ENCODE measurements at regions of chr18 and their contacts with region 1.

Region 1: GRCh38 chr18:54532217-54532616 is 58.8 kb upstream of the DYNAP start:
- DNase-seq: no peak
- H3K4me3 Mint-ChIP-seq: no peak overlapping the region
- H3K27ac Mint-ChIP-seq: no peak overlapping the region
- H3K4me1 Mint-ChIP-seq: no peaks in the 10 kb centered on the region
- H3K27me3 Mint-ChIP-seq: peaks cover 7% of the 10 kb centered on the region

Region 2: DNA sequence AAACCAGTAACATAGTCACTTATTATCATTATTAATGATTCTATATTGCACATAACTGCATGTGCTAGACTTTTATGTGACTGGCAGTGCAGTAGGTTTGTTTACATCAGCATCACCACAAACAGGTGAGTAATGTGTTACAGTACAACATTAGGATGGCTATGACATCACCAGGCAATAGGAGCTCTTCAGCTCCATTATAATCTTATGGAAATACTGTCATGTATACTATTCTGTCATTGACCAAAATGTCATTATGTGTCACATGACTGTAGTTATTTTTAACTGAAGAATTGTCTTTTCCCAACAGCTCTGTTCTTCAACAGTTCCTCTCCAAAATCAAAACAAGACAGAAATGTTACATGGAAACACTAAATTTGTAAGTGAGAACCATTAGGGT is 78.2 kb before region 1 on chr18:
- CTCF ChIA-PET with region 1: no interaction called
- intact Hi-C with region 1: loop called (anchors 5 kb)
- DNase-seq: no peak
- H3K4me3 Mint-ChIP-seq: no peak overlapping the region
- H3K27ac Mint-ChIP-seq: no peak overlapping the region
- H3K4me1 Mint-ChIP-seq: no peaks in the 10 kb centered on the region
- H3K27me3 Mint-ChIP-seq: peaks cover 7% of the 10 kb centered on the region

Region 3: DNA sequence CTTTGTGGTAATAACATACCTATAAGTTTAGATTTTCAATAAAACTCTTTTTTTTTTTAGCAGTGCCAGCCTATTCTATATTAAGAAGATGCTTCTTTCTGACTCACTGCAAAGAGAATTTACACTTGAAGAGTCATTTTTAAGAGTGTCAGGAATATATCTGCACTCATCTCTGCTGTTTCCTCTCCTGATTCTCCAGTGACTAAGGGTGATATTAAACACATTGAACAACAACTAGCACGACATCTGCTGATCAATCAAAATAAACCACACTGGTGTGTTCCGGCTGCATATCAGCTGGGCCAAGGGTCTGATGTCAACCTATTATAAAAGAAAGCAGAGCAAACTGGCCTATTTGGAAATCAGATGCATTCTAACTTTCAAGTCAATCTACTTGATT is 311.1 kb after region 1 on chr18:
- CTCF ChIA-PET with region 1: no interaction called
- intact Hi-C with region 1: no loop called
- DNase-seq: no peak
- H3K4me3 Mint-ChIP-seq: no peak overlapping the region
- H3K27ac Mint-ChIP-seq: no peak overlapping the region
- H3K4me1 Mint-ChIP-seq: no peaks in the 10 kb centered on the region
- H3K27me3 Mint-ChIP-seq: no peaks in the 10 kb centered on the region

Measured in activated naive CD4-positive, alpha-beta T cell treated with anti-CD3 and anti-CD28 coated beads for 36 hours (primary cell).